Left lung (tissue), 14 donors: ENCODE measurements at regions of chr4 and their contacts with region 1.

Region 1: DNA sequence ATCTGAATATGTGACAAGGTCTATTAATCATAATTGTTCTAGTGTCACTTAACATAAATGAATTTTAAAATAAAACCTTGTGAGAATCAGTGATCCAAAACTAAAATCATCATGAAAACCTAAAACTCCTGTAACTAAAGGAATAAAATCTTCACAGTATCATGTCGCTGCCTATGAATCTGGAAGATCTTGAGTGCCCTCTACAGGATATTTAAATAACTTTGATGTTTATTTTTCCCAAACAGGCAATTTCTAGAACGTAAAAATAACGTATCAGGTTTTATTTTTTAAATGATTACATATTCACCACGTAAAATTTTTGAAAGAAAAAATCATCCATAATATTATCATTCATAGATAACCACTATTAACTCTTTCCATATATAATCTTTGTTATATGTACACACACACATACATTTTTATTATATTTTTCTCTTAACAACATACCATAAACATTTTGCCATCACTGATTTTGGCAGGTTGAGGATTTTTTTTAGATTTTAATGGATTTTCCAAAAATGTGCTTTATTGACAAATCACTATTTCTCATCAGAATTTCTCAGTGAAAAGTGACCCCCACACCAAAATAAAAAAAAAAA is 79.6 kb downstream of the COMMD8 start:
- DNase-seq: peak in 1 of 4 donors; percentile 28
- ATAC-seq: no peak
- H3K4me3 ChIP-seq: no peak overlapping the region
- H3K27ac ChIP-seq: no peak overlapping the region
- H3K4me1 ChIP-seq: no peaks in the 10 kb centered on the region
- H3K27me3 ChIP-seq: no peaks in the 10 kb centered on the region
- CTCF ChIP-seq: peak in 1 of 2 donors; percentile 43

Region 2: DNA sequence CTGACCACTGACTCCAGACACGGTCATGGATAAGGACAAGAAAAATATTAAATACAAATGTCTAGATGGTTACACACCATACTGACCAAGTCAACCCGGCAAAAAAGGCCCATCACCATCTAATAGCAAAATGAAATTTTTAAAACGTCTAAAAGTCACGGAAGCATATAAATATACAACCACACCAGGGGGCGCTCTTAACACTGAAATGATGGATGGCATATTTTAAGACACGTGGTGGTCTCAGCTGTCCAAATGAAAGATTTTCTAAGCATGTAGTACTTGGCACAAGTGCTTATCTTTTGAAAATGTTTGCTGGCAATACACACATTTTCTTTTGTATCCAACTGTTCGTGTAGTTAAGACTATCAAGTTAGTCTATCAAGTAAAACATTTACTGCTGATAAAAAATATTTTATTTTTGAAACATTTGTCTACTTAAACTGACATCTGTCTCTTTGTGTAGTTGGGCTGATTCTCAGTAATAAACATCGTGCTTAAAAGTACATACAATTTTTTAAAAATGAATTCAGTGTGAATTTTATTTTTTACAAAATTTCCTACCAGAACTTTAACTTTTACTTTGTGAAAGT is 539.5 kb before region 1 on chr4:
- intact Hi-C with region 1: loop called in 1 of 2 experiments (anchors 5 kb)
- DNase-seq: peak in 2 of 4 donors; percentile 27 to 66
- ATAC-seq: peak; percentile 30
- H3K4me3 ChIP-seq: no peak overlapping the region
- H3K27ac ChIP-seq: no peak overlapping the region
- H3K4me1 ChIP-seq: no peaks in the 10 kb centered on the region
- H3K27me3 ChIP-seq: no peaks in the 10 kb centered on the region
- CTCF ChIP-seq: peak; percentile 31 to 40

Region 3: GRCh38 chr4:46931981-46932380 is 451.9 kb before region 1 on chr4:
- intact Hi-C with region 1: loop called in 1 of 2 experiments (anchors 10 kb)
- DNase-seq: peak in 2 of 4 donors; percentile 13 to 52
- ATAC-seq: peak; percentile 86
- H3K4me3 ChIP-seq: no peak overlapping the region
- H3K27ac ChIP-seq: no peak overlapping the region
- H3K4me1 ChIP-seq: no peaks in the 10 kb centered on the region
- H3K27me3 ChIP-seq: no peaks in the 10 kb centered on the region
- CTCF ChIP-seq: peak in 1 of 2 donors; percentile 43